ENCODE measurements at regions of chr6 and their contacts with region 1.

Region 1: DNA sequence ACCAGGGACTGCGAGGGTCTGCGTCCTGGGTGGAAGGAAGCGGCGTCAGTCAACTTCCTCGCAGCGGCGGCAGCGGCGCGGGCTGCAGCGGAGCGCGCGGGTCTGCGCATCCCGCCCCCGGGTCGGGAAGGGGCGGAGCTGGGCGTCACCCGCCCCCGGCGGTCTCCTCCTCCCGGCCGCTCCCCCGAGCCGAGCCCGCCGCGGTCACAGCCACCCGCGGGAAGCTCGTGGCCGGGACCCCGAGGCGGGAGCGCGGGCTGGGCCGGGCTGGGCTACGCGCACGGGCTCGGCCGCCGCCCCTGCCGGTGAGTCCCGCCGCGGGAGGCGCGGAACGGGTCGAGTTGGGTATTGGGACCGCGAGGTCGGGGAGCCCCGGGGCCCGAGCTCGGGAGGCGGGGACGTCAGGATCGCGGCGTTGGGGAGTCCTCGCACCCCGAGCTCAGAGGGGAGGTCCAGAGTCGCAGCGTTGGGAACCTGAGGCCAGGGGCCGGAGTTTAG is at the start of gene PAQR8:
- DNase-seq: peak; percentile 83
- H3K4me3 Mint-ChIP-seq: peak within 1 kb of the TSS; percentile 93
- H3K27ac Mint-ChIP-seq: peak within 1 kb of the TSS; percentile 72
- H3K4me1 Mint-ChIP-seq: peaks cover 29% of the 10 kb centered on the region
- H3K27me3 Mint-ChIP-seq: no peaks in the 10 kb centered on the region
- total RNA-seq, gene PAQR8: 12.8 to 14.1 TPM

Region 2: DNA sequence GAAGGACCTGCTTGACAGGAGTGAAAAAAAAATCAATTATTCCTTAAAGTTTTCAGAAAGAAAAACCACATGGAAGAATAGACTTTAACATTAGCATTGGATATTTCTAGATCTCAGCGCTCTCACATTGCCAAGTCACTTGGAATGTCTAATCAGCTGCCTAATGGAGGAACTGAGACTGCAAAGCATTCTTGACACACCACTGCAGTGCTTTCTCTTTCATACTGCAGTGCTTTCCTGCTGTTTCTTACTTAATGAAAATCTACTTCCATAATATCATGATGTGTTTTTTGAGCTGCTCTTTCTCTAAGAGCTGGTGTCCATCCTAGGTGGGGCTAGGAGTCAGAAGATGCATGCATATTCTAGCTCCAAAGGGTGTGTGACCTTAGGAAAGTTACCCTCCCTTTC is 57.0 kb before region 1 on chr6:
- CTCF ChIA-PET with region 1: interaction called, 6 read pairs
- POLR2A ChIA-PET with region 1: interaction called, 17 read pairs
- DNase-seq: no peak
- H3K4me3 Mint-ChIP-seq: peak overlapping the region; percentile 24
- H3K27ac Mint-ChIP-seq: peak overlapping the region; percentile 67
- H3K4me1 Mint-ChIP-seq: peaks cover 52% of the 10 kb centered on the region
- H3K27me3 Mint-ChIP-seq: no peaks in the 10 kb centered on the region

Region 3: DNA sequence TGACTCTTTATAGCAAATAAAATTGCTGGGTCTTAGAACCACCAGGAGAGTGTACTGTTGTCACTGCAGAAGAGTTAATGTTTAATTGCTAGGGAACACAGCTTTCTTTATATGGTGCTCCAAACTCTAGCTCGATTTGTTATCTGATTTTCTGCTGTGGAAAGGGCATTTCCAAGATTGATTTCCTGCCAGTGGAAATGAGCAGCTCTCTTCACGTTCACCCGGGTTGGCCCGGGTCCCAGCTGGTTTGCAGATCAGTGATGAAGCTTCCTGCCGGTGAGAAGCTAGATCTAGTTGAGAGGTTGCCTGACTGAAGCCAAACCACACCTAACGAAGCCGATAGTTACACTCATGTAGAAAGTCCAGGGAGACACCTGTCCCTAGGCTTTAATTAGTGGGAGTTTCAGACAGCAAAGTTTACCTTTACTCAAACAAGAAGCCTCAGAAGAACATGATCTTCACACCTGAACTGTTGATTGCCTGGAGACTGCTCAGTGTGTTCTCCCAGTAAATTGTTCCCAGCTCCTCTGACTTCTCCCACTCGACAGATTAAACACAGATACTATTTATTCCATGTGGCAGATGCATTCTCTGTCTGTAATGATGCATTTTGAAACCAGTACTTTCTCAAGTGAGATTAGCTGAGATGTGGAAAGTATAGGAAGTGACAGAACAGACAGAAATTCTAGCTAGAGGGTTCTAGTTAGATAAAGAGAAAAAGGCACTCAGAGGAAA is 27.8 kb after region 1 on chr6:
- CTCF ChIA-PET with region 1: interaction called, 71 read pairs
- POLR2A ChIA-PET with region 1: interaction called, 54 read pairs
- DNase-seq: peak; percentile 61
- H3K4me3 Mint-ChIP-seq: peak overlapping the region; percentile 44
- H3K27ac Mint-ChIP-seq: peak overlapping the region; percentile 92
- H3K4me1 Mint-ChIP-seq: peaks cover 67% of the 10 kb centered on the region
- H3K27me3 Mint-ChIP-seq: no peaks in the 10 kb centered on the region

Region 4: GRCh38 chr6:52399511-52400312 is 37.7 kb after region 1 on chr6:
- CTCF ChIA-PET with region 1: interaction called, 22 read pairs
- POLR2A ChIA-PET with region 1: interaction called, 34 read pairs
- DNase-seq: no peak
- H3K4me3 Mint-ChIP-seq: no peak overlapping the region
- H3K27ac Mint-ChIP-seq: no peak overlapping the region
- H3K4me1 Mint-ChIP-seq: peaks cover 53% of the 10 kb centered on the region
- H3K27me3 Mint-ChIP-seq: peaks cover 4% of the 10 kb centered on the region